HCT116 (cell line): ENCODE measurements at regions of chr14 and their contacts with region 1.

Region 1: DNA sequence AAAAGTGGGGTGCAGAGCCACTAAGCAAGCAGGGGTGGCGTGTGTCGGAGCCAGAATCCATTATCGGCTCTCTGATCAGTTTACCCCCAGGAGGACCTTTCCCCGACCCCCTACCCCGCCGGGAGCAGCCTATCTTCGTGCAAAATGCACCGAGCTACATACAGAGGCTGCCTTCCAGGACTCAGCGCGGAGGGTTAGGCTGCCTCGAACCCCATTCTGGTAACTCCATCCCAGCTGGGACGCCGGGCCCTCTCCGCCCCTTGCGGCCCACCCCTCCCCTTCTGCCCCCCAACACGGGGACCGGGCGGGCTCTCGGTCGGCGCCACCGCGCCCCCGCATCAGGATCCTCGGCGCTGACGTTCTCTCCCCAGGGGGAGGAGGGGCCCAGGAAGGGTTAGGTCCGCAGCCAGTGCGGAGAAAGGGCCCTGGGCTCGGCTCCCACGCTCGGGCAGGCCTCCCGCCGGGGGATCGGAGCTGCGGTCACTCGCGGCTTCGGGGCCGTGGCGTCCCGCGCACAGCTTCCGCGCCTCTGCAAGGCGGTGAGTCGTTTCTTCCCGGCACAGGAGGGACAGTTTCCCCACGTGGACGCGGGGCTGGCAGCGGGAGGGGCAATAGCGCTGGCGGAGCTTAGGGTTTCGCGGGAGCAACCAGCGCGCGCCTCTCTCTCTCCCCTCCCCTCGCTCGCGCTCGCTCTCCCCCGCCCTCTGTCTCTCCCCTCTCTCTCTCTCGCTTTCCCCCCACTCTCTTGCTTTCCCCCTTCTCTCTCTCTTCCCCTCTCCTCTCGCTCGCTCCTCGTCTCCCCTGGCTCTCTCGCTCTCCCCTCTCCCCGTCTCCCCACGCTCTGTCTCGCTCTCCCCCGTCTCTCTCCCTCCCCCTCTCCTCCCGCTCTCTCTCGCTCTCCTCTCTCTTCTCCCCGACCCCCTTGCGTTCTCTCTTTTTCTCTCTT is 12.5 kb upstream of the MAP3K9 start:
- DNase-seq: no peak
- ATAC-seq: peak; percentile 63
- H3K4me3 ChIP-seq: peak overlapping the region; percentile 52 to 73
- H3K27ac ChIP-seq: peak overlapping the region; percentile 8; the same call in 1 of the 2 replicates
- H3K4me1 ChIP-seq: peaks cover 10 to 24% of the 10 kb centered on the region in 2 experiments; a peak in 3 of 4 replicates
- H3K27me3 ChIP-seq: no peaks in the 10 kb centered on the region
- CTCF ChIP-seq: no peak
- POLR2A ChIP-seq: no peak
- RAD21 ChIP-seq: no peak

Region 2: GRCh38 chr14:70622111-70622712 is 199.6 kb before region 1 on chr14:
- CTCF ChIA-PET with region 1: interaction called, 4 read pairs
- POLR2A ChIA-PET with region 1: no interaction called
- RAD21 ChIA-PET with region 1: no interaction called
- intact Hi-C with region 1: loop called (anchors 1 kb)
- DNase-seq: peak; percentile 53
- ATAC-seq: peak; percentile 98
- H3K4me3 ChIP-seq: no peak overlapping the region
- H3K27ac ChIP-seq: no peak overlapping the region
- H3K4me1 ChIP-seq: no peaks in the 10 kb centered on the region
- H3K27me3 ChIP-seq: no peaks in the 10 kb centered on the region
- CTCF ChIP-seq: peak; percentile 81 to 89 (median 88)
- POLR2A ChIP-seq: no peak
- RAD21 ChIP-seq: peak; percentile 91

Region 3: GRCh38 chr14:70809543-70810244 is 12.2 kb before region 1 on chr14:
- CTCF ChIA-PET with region 1: interaction called, 23 read pairs
- POLR2A ChIA-PET with region 1: interaction called, 6 read pairs
- RAD21 ChIA-PET with region 1: interaction called, 3 to 13 read pairs
- intact Hi-C with region 1: no loop called
- DNase-seq: peak; percentile 96
- ATAC-seq: peak; percentile 92
- H3K4me3 ChIP-seq: peak overlapping the region; percentile 75 to 79
- H3K27ac ChIP-seq: peak overlapping the region; percentile 71
- H3K4me1 ChIP-seq: peaks cover 17 to 29% of the 10 kb centered on the region in 2 experiments
- H3K27me3 ChIP-seq: no peaks in the 10 kb centered on the region
- CTCF ChIP-seq: no peak
- POLR2A ChIP-seq: no peak
- RAD21 ChIP-seq: no peak

Region 4: DNA sequence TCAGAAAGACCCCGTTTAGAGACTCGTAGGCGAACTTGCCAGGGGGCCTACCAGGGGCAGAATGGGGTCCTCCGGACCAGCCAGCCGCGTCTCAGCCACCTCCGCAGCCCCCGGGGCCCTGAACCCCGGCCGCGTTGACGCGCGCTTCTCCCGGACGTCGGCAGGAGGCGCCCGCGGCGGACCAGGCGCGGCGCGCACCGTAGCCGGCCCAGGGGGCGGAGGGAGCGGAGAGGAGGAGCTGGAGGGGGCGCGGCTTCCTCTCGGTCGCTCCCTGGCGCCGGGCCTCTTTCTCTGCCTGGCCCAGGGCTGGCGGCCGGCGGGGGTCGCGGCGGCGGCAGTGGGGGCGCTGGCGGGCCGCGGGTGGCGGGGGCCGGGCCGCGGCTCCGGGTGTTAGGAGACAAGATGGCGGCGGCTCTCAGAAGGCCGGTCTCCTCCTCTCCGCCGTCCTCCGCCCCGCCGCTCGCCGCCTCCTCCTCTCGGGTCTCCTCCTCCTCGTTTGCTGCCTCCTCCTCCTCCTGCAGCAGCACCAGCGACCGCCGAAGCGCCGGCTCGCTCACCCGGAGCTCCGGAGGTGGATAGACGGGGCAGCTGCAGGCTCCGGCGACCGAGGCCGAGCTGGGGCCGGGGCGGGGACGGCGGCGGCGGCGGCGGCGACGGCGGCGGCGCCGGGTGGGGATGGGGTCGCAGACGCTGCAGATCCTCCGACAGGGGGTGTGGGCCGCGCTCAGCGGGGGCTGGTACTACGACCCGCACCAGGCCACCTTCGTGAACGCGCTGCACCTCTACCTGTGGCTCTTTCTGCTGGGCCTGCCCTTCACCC is 85.5 kb after region 1 on chr14 and contains the start of gene PCNX1:
- CTCF ChIA-PET with region 1: interaction called, 8 read pairs
- POLR2A ChIA-PET with region 1: no interaction called
- RAD21 ChIA-PET with region 1: no interaction called
- intact Hi-C with region 1: loop called (anchors 5 kb)
- DNase-seq: peak; percentile 46
- ATAC-seq: peak; percentile 86
- H3K4me3 ChIP-seq: peak within 1 kb of the TSS; percentile 61 to 75
- H3K27ac ChIP-seq: peak within 1 kb of the TSS; percentile 74
- H3K4me1 ChIP-seq: peaks cover 9 to 30% of the 10 kb centered on the region in 2 experiments
- H3K27me3 ChIP-seq: no peaks in the 10 kb centered on the region
- CTCF ChIP-seq: peak; percentile 50 to 87 (median 66); a peak in 5 of 6 replicates
- POLR2A ChIP-seq: peak; percentile 24
- RAD21 ChIP-seq: peak; percentile 41
- total RNA-seq, gene PCNX1: 52.2 TPM

Region 5: GRCh38 chr14:70955543-70956480 is 134.0 kb after region 1 on chr14:
- CTCF ChIA-PET with region 1: interaction called, 22 read pairs
- POLR2A ChIA-PET with region 1: no interaction called
- RAD21 ChIA-PET with region 1: interaction called in 1 of 2 experiments, 3 read pairs
- intact Hi-C with region 1: loop called (anchors 1 kb)
- DNase-seq: no peak
- ATAC-seq: peak; percentile 77
- H3K4me3 ChIP-seq: no peak overlapping the region
- H3K27ac ChIP-seq: no peak overlapping the region
- H3K4me1 ChIP-seq: no peaks in the 10 kb centered on the region
- H3K27me3 ChIP-seq: no peaks in the 10 kb centered on the region
- CTCF ChIP-seq: peak; percentile 58 to 66 (median 65); a peak in 5 of 6 replicates
- POLR2A ChIP-seq: no peak
- RAD21 ChIP-seq: peak; percentile 59

Region 6: DNA sequence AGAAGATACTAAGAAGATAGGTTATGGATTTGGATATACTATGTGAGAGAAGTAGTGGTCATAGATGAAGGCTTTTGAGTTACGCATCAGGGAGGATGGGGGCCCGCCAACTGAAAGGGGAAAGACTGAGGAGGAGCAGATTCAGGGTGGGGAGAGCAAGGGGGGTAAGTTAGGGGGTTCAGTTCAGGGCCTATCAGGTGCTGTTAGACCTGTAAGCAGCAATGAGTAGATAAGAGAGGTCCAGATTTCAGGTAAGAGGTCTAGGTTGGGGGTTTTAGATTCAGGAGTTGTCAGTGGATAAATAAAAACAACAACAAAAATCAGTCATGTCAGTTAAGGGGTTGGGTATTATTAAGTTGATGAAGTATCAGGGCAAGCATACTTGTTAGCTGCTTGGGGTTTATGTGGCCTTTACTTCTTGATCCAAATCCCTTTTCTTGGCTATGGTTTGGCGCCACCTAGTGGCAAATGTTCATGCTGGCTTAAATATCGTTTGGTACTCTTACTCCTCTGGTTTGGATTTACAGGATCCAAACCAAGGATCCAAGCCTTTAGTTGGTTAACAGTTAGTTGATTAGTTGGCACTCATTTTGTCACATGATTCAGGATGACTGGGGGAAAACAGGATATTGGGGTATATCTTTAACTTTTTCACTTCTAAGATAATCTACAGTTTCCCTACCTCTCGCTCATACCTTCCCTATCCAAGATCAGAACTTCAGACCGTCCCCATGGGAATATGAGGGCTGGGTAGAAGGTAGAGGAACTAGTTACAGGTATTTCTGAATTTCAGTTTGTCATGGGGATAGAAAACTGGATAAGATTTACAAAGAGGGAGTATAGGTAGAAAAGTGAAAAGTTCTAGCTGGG is 150.5 kb after region 1 on chr14:
- CTCF ChIA-PET with region 1: interaction called, 14 read pairs
- POLR2A ChIA-PET with region 1: no interaction called
- RAD21 ChIA-PET with region 1: interaction called in 1 of 2 experiments, 3 read pairs
- intact Hi-C with region 1: loop called (anchors 5 kb)
- DNase-seq: peak; percentile 75
- ATAC-seq: peak; percentile 81
- H3K4me3 ChIP-seq: no peak overlapping the region
- H3K27ac ChIP-seq: no peak overlapping the region
- H3K4me1 ChIP-seq: no peaks in the 10 kb centered on the region
- H3K27me3 ChIP-seq: no peaks in the 10 kb centered on the region
- CTCF ChIP-seq: peak; percentile 74 to 97 (median 89)
- POLR2A ChIP-seq: no peak
- RAD21 ChIP-seq: peak; percentile 81

Region 7: GRCh38 chr14:71050204-71050823 is 228.5 kb after region 1 on chr14:
- CTCF ChIA-PET with region 1: no interaction called
- POLR2A ChIA-PET with region 1: no interaction called
- RAD21 ChIA-PET with region 1: no interaction called
- intact Hi-C with region 1: no loop called
- DNase-seq: no peak
- ATAC-seq: peak; percentile 59; the same call in 1 of the 2 replicates
- H3K4me3 ChIP-seq: no peak overlapping the region
- H3K27ac ChIP-seq: no peak overlapping the region
- H3K4me1 ChIP-seq: no peaks in the 10 kb centered on the region
- H3K27me3 ChIP-seq: no peaks in the 10 kb centered on the region
- CTCF ChIP-seq: peak in 2 of 3 experiments; percentile 29 to 49; a peak in 3 of 6 replicates
- POLR2A ChIP-seq: no peak
- RAD21 ChIP-seq: no peak